ENCODE measurements at regions of chr16 and their contacts with region 1.

Region 1: GRCh38 chr16:11407047-11407982 is 62.1 kb downstream of the RMI2 start:
- DNase-seq: peak; percentile 85
- H3K4me3 Mint-ChIP-seq: no peak overlapping the region
- H3K27ac Mint-ChIP-seq: no peak overlapping the region
- H3K4me1 Mint-ChIP-seq: no peaks in the 10 kb centered on the region
- H3K27me3 Mint-ChIP-seq: peaks cover 19% of the 10 kb centered on the region
- CTCF ChIP-seq: peak; percentile 72

Region 2: GRCh38 chr16:11497851-11498289 is 90.6 kb after region 1 on chr16:
- CTCF ChIA-PET with region 1: interaction called, 7 read pairs
- intact Hi-C with region 1: loop called (anchors 5 kb)
- DNase-seq: peak; percentile 54
- H3K4me3 Mint-ChIP-seq: peak overlapping the region; percentile 23
- H3K27ac Mint-ChIP-seq: peak overlapping the region; percentile 86
- H3K4me1 Mint-ChIP-seq: peaks cover 30% of the 10 kb centered on the region
- H3K27me3 Mint-ChIP-seq: no peaks in the 10 kb centered on the region
- CTCF ChIP-seq: no peak

Region 3: GRCh38 chr16:11586856-11587642 is 179.7 kb after region 1 on chr16 and contains the start of gene LITAF:
- CTCF ChIA-PET with region 1: interaction called, 4 read pairs
- intact Hi-C with region 1: loop called (anchors 5 kb)
- DNase-seq: peak; percentile 80
- H3K4me3 Mint-ChIP-seq: peak within 1 kb of the TSS; percentile 77
- H3K27ac Mint-ChIP-seq: peak within 1 kb of the TSS; percentile 98
- H3K4me1 Mint-ChIP-seq: peaks cover 33% of the 10 kb centered on the region
- H3K27me3 Mint-ChIP-seq: no peaks in the 10 kb centered on the region
- CTCF ChIP-seq: no peak
- total RNA-seq, gene LITAF: 328 and 443 TPM in 2 replicates

Region 4: GRCh38 chr16:11669380-11670146 is 262.2 kb after region 1 on chr16:
- CTCF ChIA-PET with region 1: interaction called, 5 read pairs
- intact Hi-C with region 1: loop called (anchors 10 kb)
- DNase-seq: no peak
- H3K4me3 Mint-ChIP-seq: peak overlapping the region; percentile 61
- H3K27ac Mint-ChIP-seq: no peak overlapping the region
- H3K4me1 Mint-ChIP-seq: peaks cover 39% of the 10 kb centered on the region
- H3K27me3 Mint-ChIP-seq: no peaks in the 10 kb centered on the region
- CTCF ChIP-seq: no peak

Region 5: GRCh38 chr16:11819798-11820197 is 412.5 kb after region 1 on chr16:
- CTCF ChIA-PET with region 1: no interaction called
- intact Hi-C with region 1: loop called (anchors 2 kb)
- DNase-seq: no peak
- H3K4me3 Mint-ChIP-seq: no peak overlapping the region
- H3K27ac Mint-ChIP-seq: peak overlapping the region; percentile 51
- H3K4me1 Mint-ChIP-seq: peaks cover 18% of the 10 kb centered on the region
- H3K27me3 Mint-ChIP-seq: no peaks in the 10 kb centered on the region
- CTCF ChIP-seq: no peak

Measured in Calu3 (cell line).